ENCODE measurements at regions of chr11 and their contacts with region 1.

Region 1: GRCh38 chr11:67572747-67573419 is 10.7 kb upstream of the GSTP1 start:
- DNase-seq: no peak
- H3K4me3 ChIP-seq: no peak overlapping the region
- H3K27me3 ChIP-seq: peaks cover 12% of the 10 kb centered on the region
- CTCF ChIP-seq: peak; percentile 79

Region 2: GRCh38 chr11:67583247-67584204 is 10.6 kb after region 1 on chr11 and contains the start of gene GSTP1:
- CTCF ChIA-PET with region 1: interaction called, 50 read pairs
- POLR2A ChIA-PET with region 1: no interaction called
- DNase-seq: peak; percentile 55
- H3K4me3 ChIP-seq: peak within 1 kb of the TSS; percentile 94
- H3K27me3 ChIP-seq: peaks cover 12% of the 10 kb centered on the region
- CTCF ChIP-seq: peak; percentile 56
- polyA plus RNA-seq, gene GSTP1: 679 and 883 TPM in 2 replicates

Region 3: GRCh38 chr11:67613960-67614715 is 41.3 kb after region 1 on chr11:
- CTCF ChIA-PET with region 1: interaction called, 11 read pairs
- POLR2A ChIA-PET with region 1: no interaction called
- DNase-seq: no peak
- H3K4me3 ChIP-seq: 0 out of 2 replicates have a peak overlapping the region, but pooled peaks have one; percentile 2
- H3K27me3 ChIP-seq: peaks cover 16% of the 10 kb centered on the region
- CTCF ChIP-seq: peak; percentile 75

Region 4: DNA sequence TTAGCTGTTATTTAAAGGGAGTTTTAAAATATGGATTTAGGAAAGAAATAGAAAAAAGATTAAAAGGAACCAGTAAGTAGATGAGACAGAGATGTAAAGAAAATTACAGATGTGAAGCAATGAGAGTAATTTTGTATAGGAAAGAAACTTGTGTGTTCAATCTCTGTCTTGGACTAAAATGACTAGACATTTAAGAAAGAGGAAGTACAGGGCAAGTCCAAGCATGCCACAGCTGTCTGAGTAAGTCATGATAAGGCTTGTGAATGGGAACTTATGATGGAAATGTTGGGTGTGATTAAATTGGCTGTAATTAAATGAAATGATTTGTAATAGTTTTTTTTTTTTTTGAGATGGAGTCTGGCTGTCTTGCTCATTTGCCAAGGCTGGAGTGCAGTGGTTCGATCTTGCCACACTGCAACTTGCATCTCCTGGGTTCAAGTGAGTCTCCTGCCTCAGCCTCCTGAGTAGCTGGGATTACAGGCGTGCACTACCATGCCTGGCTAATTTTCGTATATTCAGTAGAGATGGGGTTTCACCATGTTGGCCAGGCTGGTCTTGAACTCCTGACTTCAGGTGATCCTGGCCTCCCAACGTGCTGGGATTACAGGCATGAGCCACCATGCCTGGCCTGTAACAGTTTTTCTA is 83.5 kb after region 1 on chr11:
- CTCF ChIA-PET with region 1: interaction called, 15 read pairs
- POLR2A ChIA-PET with region 1: no interaction called
- DNase-seq: no peak
- H3K4me3 ChIP-seq: no peak overlapping the region
- H3K27me3 ChIP-seq: 0 out of 2 replicates have a peak, but pooled peaks cover 1% of the 10 kb centered on the region
- CTCF ChIP-seq: no peak

Measured in BJ (cell line).